ENCODE measurements at regions of chr6 and their contacts with region 1.

Region 1: DNA sequence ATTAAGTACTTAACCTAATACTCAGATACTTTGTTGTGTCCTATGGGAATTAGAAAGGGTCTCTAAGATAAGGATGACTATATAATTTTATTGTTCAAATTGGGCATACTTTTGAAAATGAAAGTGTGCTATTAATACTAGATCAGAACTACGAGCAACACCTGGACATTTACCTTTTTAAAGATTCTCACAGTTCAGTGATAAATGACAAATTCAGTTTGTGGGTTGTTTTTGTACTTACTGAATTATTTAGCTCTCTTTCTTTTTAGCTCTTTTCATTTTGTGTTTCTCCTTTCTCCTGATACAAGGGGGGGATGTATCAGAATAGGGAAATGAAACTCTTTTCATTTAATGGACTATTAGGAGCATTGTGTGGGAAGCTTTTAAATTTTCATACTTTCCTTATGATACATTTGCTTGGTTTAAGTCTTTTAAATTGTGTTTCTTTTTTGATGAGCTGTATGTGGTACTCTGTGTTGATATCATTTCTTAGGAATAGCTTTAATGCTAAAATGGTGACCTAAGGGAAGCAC is 47.5 kb downstream of the PHF3 start:
- DNase-seq: no peak
- CTCF ChIP-seq: no peak

Region 2: GRCh38 chr6:63372951-63373533 is 310.1 kb before region 1 on chr6:
- CTCF ChIA-PET with region 1: no interaction called
- POLR2A ChIA-PET with region 1: no interaction called
- DNase-seq: no peak
- CTCF ChIP-seq: no peak

Region 3: DNA sequence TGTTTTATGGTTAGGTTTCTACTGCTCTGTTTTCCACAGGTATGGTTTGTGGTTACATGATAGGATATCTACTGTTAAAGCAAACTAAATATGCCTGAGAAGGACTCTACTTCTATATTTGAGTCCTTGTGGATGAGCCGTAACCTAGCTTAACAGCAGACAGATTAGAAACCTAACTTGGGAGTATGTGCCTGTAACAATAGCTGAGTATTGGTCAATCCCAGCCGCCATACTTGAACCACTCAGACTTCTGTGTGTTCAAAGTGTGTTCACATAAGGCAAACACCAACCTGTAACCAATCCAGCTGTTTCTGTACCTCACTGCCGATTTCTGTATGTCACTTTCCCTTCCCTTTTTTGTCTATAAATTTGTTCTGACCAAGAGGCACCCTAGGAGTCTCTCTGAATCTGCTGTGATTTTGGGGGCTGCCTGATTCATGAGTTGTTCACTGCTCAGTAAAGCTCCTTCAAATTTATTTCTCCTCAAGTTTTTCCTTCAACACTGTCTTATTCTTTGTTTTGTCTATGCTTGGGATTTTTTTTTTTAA is 10.5 kb before region 1 on chr6:
- CTCF ChIA-PET with region 1: interaction called, 10 read pairs
- POLR2A ChIA-PET with region 1: no interaction called
- DNase-seq: no peak
- CTCF ChIP-seq: no peak

Region 4: GRCh38 chr6:63882224-63882623 is 199.1 kb after region 1 on chr6:
- CTCF ChIA-PET with region 1: no interaction called
- POLR2A ChIA-PET with region 1: no interaction called
- DNase-seq: no peak
- CTCF ChIP-seq: no peak